ENCODE measurements at regions of chr18 and their contacts with region 1.

Region 1: GRCh38 chr18:50218432-50219197 is 23.7 kb upstream of the MYO5B start:
- DNase-seq: peak in 3 of 6 donors; percentile 21 to 54 (median 23)
- ATAC-seq: peak in 3 of 4 donors; percentile 78 to 85 (median 80)
- H3K4me3 ChIP-seq: no peak overlapping the region
- H3K27ac ChIP-seq: no peak overlapping the region
- H3K4me1 ChIP-seq: no peaks in the 10 kb centered on the region
- H3K27me3 ChIP-seq: no peaks in the 10 kb centered on the region
- CTCF ChIP-seq: no peak

Region 2: DNA sequence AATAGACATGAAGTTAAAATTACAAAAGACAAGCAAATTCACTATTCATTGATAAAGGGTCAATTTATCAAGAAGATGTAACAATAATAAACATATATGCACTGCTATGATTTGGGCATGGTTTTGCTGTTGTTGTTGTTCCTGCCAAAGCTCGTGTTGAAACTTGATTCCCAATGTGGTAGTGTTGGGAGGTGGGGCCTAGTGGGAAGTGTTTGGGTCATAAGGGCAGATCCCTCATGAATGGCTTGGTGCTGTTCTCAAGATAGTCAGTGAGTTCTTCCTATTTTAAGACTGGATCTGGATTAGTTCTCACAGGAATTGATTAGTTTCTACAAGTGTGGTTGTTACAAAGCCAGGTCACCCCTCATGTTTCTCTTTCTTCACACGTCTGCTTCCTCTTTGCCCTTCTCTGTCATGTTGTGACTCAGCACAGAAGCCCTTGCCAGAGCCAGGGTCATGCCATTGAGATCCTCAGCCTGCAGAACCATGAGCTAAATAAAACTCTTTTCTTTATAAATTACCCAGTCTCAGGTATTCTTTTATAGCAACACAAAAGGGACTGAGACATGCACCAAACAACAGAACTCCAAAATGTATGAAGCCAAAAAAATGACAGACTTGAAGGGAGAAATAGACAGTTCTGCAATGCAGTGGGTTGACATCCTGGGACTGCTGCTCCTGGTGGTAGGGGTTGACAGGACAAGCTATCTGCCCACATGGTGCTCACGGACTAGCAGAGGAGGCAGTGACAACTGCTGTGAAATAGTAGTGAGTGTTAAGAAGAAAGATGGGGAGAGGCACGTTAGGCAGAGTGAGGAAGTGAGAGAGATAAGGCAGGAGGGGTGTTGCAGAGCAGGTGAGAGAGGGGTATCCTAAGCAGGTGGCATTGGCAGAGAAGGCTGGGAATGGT is 137.7 kb after region 1 on chr18:
- intact Hi-C with region 1: loop called in 2 of 3 experiments (anchors 5 to 10 kb)
- DNase-seq: no peak
- ATAC-seq: peak; percentile 33 to 67 (median 42)
- H3K4me3 ChIP-seq: no peak overlapping the region
- H3K27ac ChIP-seq: no peak overlapping the region
- H3K4me1 ChIP-seq: peaks cover 0 to 5% (median 4%) of the 10 kb centered on the region in 3 donors
- H3K27me3 ChIP-seq: no peaks in the 10 kb centered on the region
- CTCF ChIP-seq: no peak

Region 3: DNA sequence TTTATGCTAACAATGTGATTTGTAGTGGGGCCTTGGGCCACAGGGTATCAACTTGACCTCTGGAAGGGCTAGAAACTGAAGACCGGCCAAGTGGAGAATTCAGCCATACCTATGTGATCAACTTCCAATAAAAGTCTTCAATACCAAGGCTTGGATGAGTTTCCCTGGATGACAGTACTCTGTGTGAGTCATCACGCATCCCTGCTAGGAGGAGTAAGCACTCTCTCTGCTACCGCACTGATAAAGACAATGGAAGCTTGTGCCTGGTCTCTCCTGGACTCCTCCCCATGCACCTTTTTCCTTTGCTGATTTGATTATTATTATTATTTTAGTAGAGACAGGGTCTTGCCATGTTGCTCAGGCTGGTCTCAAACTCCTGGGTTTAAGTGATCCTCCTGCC is 214.3 kb after region 1 on chr18:
- intact Hi-C with region 1: loop called in 1 of 3 experiments (anchors 10 kb)
- DNase-seq: no peak
- ATAC-seq: no peak
- H3K4me3 ChIP-seq: no peak overlapping the region
- H3K27ac ChIP-seq: no peak overlapping the region
- H3K4me1 ChIP-seq: no peaks in the 10 kb centered on the region
- H3K27me3 ChIP-seq: no peaks in the 10 kb centered on the region
- CTCF ChIP-seq: no peak